ENCODE measurements at regions of chr10 and their contacts with region 1.

Region 1: DNA sequence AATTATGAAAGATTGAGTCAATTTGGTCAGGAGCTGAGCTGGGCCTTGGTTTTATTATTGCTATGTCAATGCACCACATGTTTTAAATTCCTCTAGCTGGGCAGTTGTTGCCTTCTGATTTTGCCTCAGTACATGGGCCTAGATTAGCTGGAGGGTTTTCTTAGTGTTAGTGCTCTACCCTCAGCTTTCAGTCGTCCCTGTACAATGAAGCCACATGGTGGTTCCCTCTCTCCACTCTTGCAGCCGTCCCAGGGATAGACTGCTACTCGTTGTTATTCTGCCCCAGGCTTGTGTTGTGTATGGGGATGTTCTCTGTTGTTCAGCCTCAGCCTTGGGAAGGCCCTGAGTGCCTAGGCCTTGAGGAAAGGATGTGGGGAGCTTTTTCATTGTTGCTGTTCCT is 37.0 kb downstream of the NHLRC2 start:
- DNase-seq: no peak
- H3K4me3 Mint-ChIP-seq: no peak overlapping the region
- H3K27ac Mint-ChIP-seq: no peak overlapping the region
- H3K4me1 Mint-ChIP-seq: peaks cover 2% of the 10 kb centered on the region
- H3K27me3 Mint-ChIP-seq: no peaks in the 10 kb centered on the region

Region 2: GRCh38 chr10:113842171-113842570 is 49.3 kb before region 1 on chr10:
- CTCF ChIA-PET with region 1: no interaction called
- POLR2A ChIA-PET with region 1: no interaction called
- intact Hi-C with region 1: loop called (anchors 1 kb)
- DNase-seq: no peak
- H3K4me3 Mint-ChIP-seq: no peak overlapping the region
- H3K27ac Mint-ChIP-seq: no peak overlapping the region
- H3K4me1 Mint-ChIP-seq: peaks cover 6% of the 10 kb centered on the region
- H3K27me3 Mint-ChIP-seq: no peaks in the 10 kb centered on the region

Region 3: DNA sequence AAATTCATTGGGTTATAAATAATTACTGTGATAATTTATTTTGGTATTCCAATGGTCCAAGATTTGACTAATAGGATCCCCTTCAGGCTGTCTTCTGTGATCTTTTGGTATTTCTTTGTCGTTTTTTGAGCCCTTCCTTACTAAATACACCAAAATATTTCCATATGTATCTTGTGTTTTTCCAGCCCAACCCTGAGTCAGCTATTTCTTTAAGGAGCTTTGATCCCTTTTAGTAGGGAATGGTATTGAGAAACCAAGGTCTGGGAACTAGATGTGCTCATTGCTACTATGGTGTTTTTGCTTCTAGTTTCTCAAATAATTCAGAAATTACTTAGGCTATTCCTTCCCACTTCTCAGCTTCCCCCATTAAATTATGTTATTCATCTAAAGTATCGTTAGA is 21.7 kb before region 1 on chr10:
- CTCF ChIA-PET with region 1: no interaction called
- POLR2A ChIA-PET with region 1: no interaction called
- intact Hi-C with region 1: loop called (anchors 1 kb)
- DNase-seq: no peak
- H3K4me3 Mint-ChIP-seq: no peak overlapping the region
- H3K27ac Mint-ChIP-seq: no peak overlapping the region
- H3K4me1 Mint-ChIP-seq: peaks cover 3% of the 10 kb centered on the region
- H3K27me3 Mint-ChIP-seq: no peaks in the 10 kb centered on the region